ENCODE measurements at regions of chr1 and their contacts with region 1.

Region 1: GRCh38 chr1:246012341-246012740 is 494.7 kb downstream of the SMYD3 start:
- DNase-seq: no peak
- ATAC-seq: peak; percentile 71

Region 2: DNA sequence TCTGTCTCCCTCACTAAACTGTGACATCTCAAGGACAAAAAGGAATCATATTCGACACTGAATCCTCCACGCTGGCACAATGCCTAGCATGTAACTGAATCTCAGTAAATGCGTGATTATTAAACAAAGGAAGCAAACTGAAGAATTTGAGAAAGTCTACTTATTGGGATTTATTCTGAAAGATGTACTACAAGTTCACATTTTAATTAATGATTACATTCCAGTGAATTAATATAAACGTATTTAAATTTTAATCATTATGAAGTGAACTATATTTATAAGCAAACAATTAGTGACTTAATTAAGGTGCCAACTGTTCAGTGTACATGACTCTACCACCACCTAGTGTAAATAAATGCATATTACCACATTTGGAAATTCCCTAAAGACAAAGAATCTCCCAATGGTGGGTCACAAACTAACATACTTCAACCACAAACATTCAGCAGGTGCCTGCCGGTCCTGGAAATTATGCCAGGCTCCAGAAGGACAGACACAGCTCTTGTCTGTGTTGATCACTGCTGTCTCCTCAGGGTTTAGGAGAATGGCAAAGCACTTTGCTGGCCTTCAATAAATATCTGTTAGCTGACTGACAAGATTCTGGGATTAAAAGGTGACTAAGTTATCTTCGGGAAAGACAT is 438.4 kb after region 1 on chr1:
- intact Hi-C with region 1: loop called (anchors 10 kb)
- DNase-seq: no peak
- ATAC-seq: peak; percentile 53

Measured in Right ventricle myocardium superior (tissue), 1 donor.